PC-9 (cell line): ENCODE measurements at regions of chr2 and their contacts with region 1.

Region 1: GRCh38 chr2:222545843-222546795 is 109.8 kb downstream of the FARSB start:
- DNase-seq: no peak
- H3K4me3 ChIP-seq: no peak overlapping the region
- H3K27ac ChIP-seq: no peak overlapping the region
- H3K4me1 ChIP-seq: no peaks in the 10 kb centered on the region
- H3K27me3 ChIP-seq: no peaks in the 10 kb centered on the region
- CTCF ChIP-seq: no peak

Region 2: DNA sequence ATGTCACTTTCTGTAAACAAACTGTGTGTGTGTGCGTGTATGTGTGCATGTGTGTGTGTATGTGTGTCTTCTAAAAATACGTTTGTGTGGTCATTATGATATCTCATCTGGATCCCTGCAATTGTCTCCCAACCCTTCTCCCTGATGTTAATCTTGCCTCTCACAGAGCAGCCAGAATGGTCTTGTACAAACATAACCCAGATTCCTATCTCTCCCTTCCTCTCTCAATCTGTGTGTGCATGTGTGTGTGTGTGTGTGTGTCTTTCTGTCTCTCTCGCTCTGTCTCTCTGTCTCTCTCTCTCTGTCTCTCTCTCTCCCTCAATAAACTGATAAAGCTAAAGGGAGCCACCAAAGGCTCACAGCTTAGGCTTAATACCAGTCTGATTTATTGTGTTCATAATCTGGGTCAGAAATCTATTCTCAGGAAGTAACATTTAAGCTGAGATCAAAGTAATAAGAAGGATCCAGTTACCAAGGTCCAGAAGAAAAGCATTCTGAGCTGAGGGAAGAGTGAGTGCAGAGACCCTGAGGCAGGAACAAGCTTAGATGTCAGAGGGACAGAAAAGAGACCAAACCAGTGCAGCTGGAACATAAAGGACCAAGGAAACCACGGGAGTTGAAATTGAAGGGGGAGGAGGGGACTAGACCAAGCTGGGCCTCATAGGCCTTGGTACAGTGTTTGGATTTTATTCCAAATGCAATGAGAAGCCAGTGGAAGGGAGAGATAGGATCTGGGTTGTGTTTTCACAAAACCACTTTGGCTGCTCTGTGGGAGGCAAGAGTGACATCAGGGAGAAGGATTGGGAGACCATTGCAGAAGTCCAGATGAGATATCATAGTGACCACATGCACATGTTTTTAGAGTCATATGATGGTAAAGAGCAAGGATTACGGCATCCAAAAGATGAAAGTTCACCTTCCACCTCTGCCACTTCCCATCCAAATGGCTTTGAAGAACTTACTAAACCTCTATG is 457.8 kb before region 1 on chr2:
- CTCF ChIA-PET with region 1: interaction called, 11 read pairs
- POLR2A ChIA-PET with region 1: no interaction called
- intact Hi-C with region 1: no loop called
- DNase-seq: no peak
- H3K4me3 ChIP-seq: no peak overlapping the region
- H3K27ac ChIP-seq: no peak overlapping the region
- H3K4me1 ChIP-seq: no peaks in the 10 kb centered on the region
- H3K27me3 ChIP-seq: no peaks in the 10 kb centered on the region
- CTCF ChIP-seq: no peak

Region 3: DNA sequence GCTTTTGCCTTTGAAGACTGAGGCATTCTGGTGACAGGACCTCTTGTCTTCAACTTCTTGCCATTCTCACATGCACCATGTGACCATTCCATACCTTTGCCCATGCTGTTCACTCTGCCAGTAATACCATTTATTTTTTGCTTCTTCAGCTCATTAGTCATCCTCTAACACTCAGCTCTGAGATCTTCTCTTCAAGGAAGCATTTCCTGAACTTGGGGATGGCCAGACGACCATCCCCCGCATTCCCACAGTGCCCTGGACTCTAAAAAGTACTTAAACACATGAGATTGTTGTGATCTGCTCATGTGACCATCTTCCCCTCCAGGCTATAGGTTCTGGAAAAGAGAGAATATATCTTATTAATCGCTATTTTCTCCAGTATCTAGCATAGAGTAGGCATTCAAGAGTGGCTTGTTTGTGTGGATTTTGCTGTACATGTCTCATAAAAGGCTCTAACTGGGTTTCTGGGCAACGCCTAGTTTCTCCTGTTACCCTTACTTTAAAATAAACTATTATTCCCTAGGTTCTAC is 281.3 kb before region 1 on chr2:
- CTCF ChIA-PET with region 1: no interaction called
- POLR2A ChIA-PET with region 1: no interaction called
- intact Hi-C with region 1: no loop called
- DNase-seq: no peak
- H3K4me3 ChIP-seq: no peak overlapping the region
- H3K27ac ChIP-seq: no peak overlapping the region
- H3K4me1 ChIP-seq: no peaks in the 10 kb centered on the region
- H3K27me3 ChIP-seq: peaks cover 62% of the 10 kb centered on the region
- CTCF ChIP-seq: no peak

Region 4: GRCh38 chr2:222613715-222614331 is 67.7 kb after region 1 on chr2:
- CTCF ChIA-PET with region 1: no interaction called
- POLR2A ChIA-PET with region 1: no interaction called
- intact Hi-C with region 1: no loop called
- DNase-seq: peak; percentile 25 to 61
- H3K4me3 ChIP-seq: no peak overlapping the region
- H3K27ac ChIP-seq: no peak overlapping the region
- H3K4me1 ChIP-seq: no peaks in the 10 kb centered on the region
- H3K27me3 ChIP-seq: no peaks in the 10 kb centered on the region
- CTCF ChIP-seq: peak; percentile 99

Region 5: GRCh38 chr2:222912117-222912516 is 366.0 kb after region 1 on chr2:
- CTCF ChIA-PET with region 1: no interaction called
- POLR2A ChIA-PET with region 1: no interaction called
- intact Hi-C with region 1: no loop called
- DNase-seq: no peak
- H3K4me3 ChIP-seq: no peak overlapping the region
- H3K27ac ChIP-seq: peak overlapping the region; percentile 21; the same call in 1 of the 2 replicates
- H3K4me1 ChIP-seq: 0 out of 2 replicates have a peak, but pooled peaks cover 5% of the 10 kb centered on the region
- H3K27me3 ChIP-seq: no peaks in the 10 kb centered on the region
- CTCF ChIP-seq: no peak